A549 (cell line): ENCODE measurements at regions of chr18 and their contacts with region 1.

Region 1: GRCh38 chr18:36688020-36688965 is 140.5 kb downstream of the TPGS2 start:
- DNase-seq: peak; percentile 44 to 48
- ATAC-seq: peak in 1 of 2 experiments; percentile 72; a peak in 3 of 6 replicates
- H3K4me3 ChIP-seq: no peak overlapping the region
- H3K27ac ChIP-seq: no peak overlapping the region
- H3K4me1 ChIP-seq: no peaks in the 10 kb centered on the region
- CTCF ChIP-seq: peak; percentile 63
- EP300 ChIP-seq: no peak
- POLR2A ChIP-seq: no peak
- RAD21 ChIP-seq: peak; percentile 48 to 58; a peak in 4 of 5 replicates

Region 2: DNA sequence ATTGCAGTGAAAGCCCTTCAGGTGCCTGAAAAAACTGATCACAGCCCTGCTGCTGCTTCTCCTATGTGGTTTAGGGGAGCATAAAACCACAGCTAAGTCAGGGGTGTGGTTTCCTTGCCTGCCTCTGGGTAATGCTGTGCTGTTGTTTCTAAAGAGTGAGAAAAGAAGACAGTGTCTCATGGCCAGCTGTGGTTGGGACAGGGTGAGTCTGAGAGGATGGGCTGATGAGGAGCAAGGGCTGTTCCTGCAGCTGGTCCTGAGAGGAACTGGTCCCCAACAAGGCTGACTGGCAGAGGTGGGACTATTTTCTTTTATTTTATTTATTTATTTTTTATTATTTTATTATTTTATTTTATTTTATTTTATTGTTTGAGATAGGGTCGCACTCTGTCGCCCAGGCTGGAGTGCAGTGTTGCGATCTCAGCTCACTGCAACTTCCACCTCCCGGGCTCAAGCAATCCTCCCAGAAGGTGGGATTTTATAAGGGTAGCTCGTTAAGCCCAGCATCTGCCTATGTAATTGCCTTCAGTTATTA is 154.1 kb before region 1 on chr18:
- CTCF ChIA-PET with region 1: no interaction called
- POLR2A ChIA-PET with region 1: no interaction called
- DNase-seq: no peak
- ATAC-seq: no peak
- H3K4me3 ChIP-seq: no peak overlapping the region
- H3K27ac ChIP-seq: no peak overlapping the region
- H3K4me1 ChIP-seq: no peaks in the 10 kb centered on the region
- CTCF ChIP-seq: no peak
- EP300 ChIP-seq: no peak
- POLR2A ChIP-seq: no peak
- RAD21 ChIP-seq: no peak

Region 3: GRCh38 chr18:36620788-36621187 is 67.5 kb before region 1 on chr18:
- CTCF ChIA-PET with region 1: no interaction called
- POLR2A ChIA-PET with region 1: no interaction called
- DNase-seq: no peak
- ATAC-seq: no peak
- H3K4me3 ChIP-seq: no peak overlapping the region
- H3K27ac ChIP-seq: no peak overlapping the region
- H3K4me1 ChIP-seq: no peaks in the 10 kb centered on the region
- CTCF ChIP-seq: no peak
- EP300 ChIP-seq: no peak
- POLR2A ChIP-seq: no peak
- RAD21 ChIP-seq: no peak

Region 4: DNA sequence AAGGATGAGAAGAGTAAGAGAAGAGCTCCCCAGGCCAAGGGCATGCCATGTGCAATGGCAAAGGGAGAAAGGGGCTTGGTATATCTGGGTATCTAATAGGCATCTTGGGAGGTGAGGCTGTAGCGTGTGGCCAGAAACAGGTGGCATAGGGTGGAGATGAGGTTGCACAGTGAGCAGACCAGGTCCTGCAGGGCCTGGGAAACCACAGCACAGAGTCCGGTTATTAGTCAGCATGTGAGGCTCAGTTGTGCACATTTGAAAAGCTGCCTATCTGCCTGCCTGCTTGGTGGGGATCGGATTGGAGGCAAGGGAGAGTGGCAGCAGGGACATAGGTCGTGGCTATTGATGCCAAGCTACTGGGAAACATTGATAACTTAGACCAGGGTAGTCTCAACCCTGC is 50.1 kb before region 1 on chr18:
- CTCF ChIA-PET with region 1: no interaction called
- POLR2A ChIA-PET with region 1: no interaction called
- DNase-seq: no peak
- ATAC-seq: no peak
- H3K4me3 ChIP-seq: no peak overlapping the region
- H3K27ac ChIP-seq: no peak overlapping the region
- H3K4me1 ChIP-seq: no peaks in the 10 kb centered on the region
- CTCF ChIP-seq: no peak
- EP300 ChIP-seq: no peak
- POLR2A ChIP-seq: no peak
- RAD21 ChIP-seq: no peak

Region 5: GRCh38 chr18:36706134-36706881 is 18.0 kb after region 1 on chr18:
- CTCF ChIA-PET with region 1: interaction called, 13 read pairs
- POLR2A ChIA-PET with region 1: no interaction called
- DNase-seq: no peak
- ATAC-seq: no peak
- H3K4me3 ChIP-seq: no peak overlapping the region
- H3K27ac ChIP-seq: no peak overlapping the region
- H3K4me1 ChIP-seq: 0 out of 3 replicates have a peak, but pooled peaks cover under 1% of the 10 kb centered on the region
- CTCF ChIP-seq: no peak
- EP300 ChIP-seq: no peak
- POLR2A ChIP-seq: no peak
- RAD21 ChIP-seq: no peak

Region 6: GRCh38 chr18:36757081-36757480 is 68.8 kb after region 1 on chr18:
- CTCF ChIA-PET with region 1: interaction called, 26 read pairs
- POLR2A ChIA-PET with region 1: no interaction called
- DNase-seq: peak; percentile 37 to 56
- ATAC-seq: peak; percentile 73 to 82; a peak in 5 of 6 replicates
- H3K4me3 ChIP-seq: no peak overlapping the region
- H3K27ac ChIP-seq: no peak overlapping the region
- H3K4me1 ChIP-seq: no peaks in the 10 kb centered on the region
- CTCF ChIP-seq: peak; percentile 67
- EP300 ChIP-seq: no peak
- POLR2A ChIP-seq: no peak
- RAD21 ChIP-seq: peak; percentile 75 to 80

Region 7: DNA sequence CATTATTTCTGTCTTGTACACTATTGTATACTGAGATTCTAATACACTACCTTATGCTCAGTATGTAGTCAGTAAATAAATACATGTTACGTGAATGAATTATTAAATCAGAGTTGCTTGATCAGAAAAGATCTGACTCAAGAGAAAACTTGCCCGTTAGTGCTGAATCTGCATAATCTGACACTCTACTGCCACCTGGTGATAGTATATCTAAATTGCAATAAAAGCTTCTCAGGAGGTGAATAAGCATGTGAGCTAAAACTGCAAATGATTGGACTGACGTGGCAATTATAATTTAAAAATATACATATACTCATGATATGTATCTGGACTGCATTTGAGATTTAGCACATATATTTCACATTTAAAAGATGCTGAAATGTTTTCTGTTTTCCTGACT is 211.0 kb after region 1 on chr18:
- CTCF ChIA-PET with region 1: no interaction called
- POLR2A ChIA-PET with region 1: no interaction called
- DNase-seq: peak; percentile 1 to 55
- ATAC-seq: no peak
- H3K4me3 ChIP-seq: no peak overlapping the region
- H3K27ac ChIP-seq: no peak overlapping the region
- H3K4me1 ChIP-seq: 0 out of 3 replicates have a peak, but pooled peaks cover 6% of the 10 kb centered on the region
- CTCF ChIP-seq: 0 out of 3 replicates have a peak, but pooled peaks have one; percentile 14
- EP300 ChIP-seq: no peak
- POLR2A ChIP-seq: no peak
- RAD21 ChIP-seq: no peak